ENCODE measurements at regions of chr14 and their contacts with region 1.

Region 1: GRCh38 chr14:94066089-94066676 is 14.8 kb downstream of the DDX24 start:
- DNase-seq: peak; percentile 59
- H3K4me3 Mint-ChIP-seq: peak overlapping the region; percentile 46
- H3K27ac Mint-ChIP-seq: peak overlapping the region; percentile 60
- H3K4me1 Mint-ChIP-seq: peaks cover 46% of the 10 kb centered on the region
- H3K27me3 Mint-ChIP-seq: no peaks in the 10 kb centered on the region
- CTCF ChIP-seq: no peak

Region 2: GRCh38 chr14:94019323-94019722 is 46.9 kb before region 1 on chr14:
- CTCF ChIA-PET with region 1: no interaction called
- intact Hi-C with region 1: loop called (anchors 1 kb)
- DNase-seq: peak; percentile 58
- H3K4me3 Mint-ChIP-seq: no peak overlapping the region
- H3K27ac Mint-ChIP-seq: no peak overlapping the region
- H3K4me1 Mint-ChIP-seq: peaks cover 62% of the 10 kb centered on the region
- H3K27me3 Mint-ChIP-seq: no peaks in the 10 kb centered on the region
- CTCF ChIP-seq: no peak

Region 3: DNA sequence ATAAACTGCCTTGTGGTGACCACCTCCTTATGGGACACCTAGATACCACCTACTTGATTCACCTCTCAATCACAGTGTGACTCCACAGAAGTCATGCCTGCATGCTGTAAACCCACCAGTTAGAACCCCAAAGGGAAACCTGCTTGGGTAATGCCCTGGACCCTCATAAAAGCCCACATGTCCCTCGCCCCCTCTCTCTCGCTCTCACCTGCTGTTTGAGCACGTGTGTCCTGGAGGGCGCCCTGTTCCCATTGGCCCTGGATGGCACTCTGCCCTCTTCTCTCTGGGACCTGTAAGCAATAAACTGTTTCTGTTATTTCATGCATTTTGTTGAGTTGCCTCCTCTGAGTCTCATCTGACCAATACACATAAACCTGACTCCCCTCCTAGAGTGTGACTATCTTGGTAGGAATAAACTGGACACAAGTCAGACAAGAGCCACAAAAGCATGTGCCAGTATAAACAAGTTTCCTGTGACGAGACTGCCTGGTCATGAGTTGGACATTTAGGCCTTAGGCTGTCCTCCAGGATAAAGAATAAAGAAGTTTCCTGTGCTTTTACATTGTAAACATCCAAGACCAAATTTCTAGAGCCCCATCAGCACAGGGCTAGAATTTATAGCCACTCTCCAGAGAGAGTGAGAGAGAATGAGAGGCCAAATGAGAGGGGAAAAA is 54.6 kb after region 1 on chr14:
- CTCF ChIA-PET with region 1: no interaction called
- intact Hi-C with region 1: loop called (anchors 5 kb)
- DNase-seq: no peak
- H3K4me3 Mint-ChIP-seq: no peak overlapping the region
- H3K27ac Mint-ChIP-seq: no peak overlapping the region
- H3K4me1 Mint-ChIP-seq: peaks cover 11% of the 10 kb centered on the region
- H3K27me3 Mint-ChIP-seq: peaks cover 44% of the 10 kb centered on the region
- CTCF ChIP-seq: no peak

Region 4: DNA sequence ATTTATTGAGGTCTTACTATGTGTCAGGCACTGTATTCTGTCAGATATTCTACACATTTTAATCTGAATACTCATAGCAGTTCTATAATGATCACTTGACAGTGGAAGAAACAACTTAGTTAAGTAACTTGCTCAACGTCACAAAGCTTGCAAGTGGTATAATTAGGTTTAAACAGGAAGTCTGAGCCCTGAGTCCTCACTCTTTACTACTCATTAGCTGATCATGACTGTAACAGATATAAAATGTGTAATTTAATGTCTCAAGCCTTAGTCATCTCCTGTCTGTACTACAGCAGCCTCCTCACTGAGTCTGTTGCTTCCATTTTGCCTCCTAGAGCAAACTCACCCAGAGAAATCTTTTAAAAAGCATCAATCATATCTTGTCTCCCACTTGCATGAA is 146.8 kb after region 1 on chr14:
- CTCF ChIA-PET with region 1: no interaction called
- intact Hi-C with region 1: no loop called
- DNase-seq: no peak
- H3K4me3 Mint-ChIP-seq: no peak overlapping the region
- H3K27ac Mint-ChIP-seq: no peak overlapping the region
- H3K4me1 Mint-ChIP-seq: no peaks in the 10 kb centered on the region
- H3K27me3 Mint-ChIP-seq: no peaks in the 10 kb centered on the region
- CTCF ChIP-seq: no peak

Measured in Calu3 (cell line).